Activated CD8-positive, alpha-beta T cell treated with anti-CD3 and anti-CD28 coated beads for 36 hours (primary cell): ENCODE measurements at regions of chr6 and their contacts with region 1.

Region 1: DNA sequence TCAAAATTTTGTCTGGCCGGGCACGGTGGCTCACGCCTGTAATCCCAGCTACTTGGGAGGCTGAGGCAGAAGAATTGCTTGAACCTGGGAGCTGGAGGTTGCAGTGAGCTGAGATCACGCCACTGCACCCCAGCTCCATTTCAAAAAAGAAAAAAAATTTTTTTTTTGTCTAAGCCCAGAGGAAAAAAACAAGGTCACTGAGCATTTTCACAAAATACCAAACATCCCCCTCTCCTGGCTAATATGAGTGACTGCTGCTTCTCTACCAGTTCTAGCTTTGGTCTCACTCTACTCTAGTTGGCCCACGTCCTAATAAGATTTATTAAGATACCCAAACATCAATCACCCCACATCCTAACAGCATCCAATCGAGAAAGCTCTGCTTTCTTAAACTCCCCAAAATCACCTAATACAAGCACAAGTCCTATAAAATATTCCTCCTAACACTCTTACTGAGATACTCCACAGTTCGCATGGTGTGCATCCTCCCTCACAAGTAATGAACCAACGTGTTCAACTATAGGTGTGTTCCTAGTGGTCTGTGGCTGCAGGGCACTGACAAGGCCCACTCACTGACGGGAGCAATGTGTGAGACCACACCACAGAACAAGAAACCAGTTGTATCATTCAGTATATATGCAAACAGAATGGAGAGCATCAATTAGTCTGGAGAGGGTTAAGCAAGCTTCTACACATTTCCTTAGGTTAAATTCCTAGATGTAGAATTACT is 64.2 kb downstream of the FKBP5 start:
- DNase-seq: peak; percentile 35
- ATAC-seq: peak; percentile 73
- H3K4me3 Mint-ChIP-seq: no peak overlapping the region
- H3K27ac Mint-ChIP-seq: peak overlapping the region; percentile 57
- H3K4me1 Mint-ChIP-seq: peaks cover 38% of the 10 kb centered on the region
- H3K27me3 Mint-ChIP-seq: no peaks in the 10 kb centered on the region
- CTCF ChIP-seq: peak; percentile 49

Region 2: GRCh38 chr6:35590622-35591066 is 33.9 kb before region 1 on chr6:
- CTCF ChIA-PET with region 1: interaction called, 63 read pairs
- POLR2A ChIA-PET with region 1: interaction called, 5 read pairs
- intact Hi-C with region 1: loop called (anchors 5 kb)
- DNase-seq: no peak
- ATAC-seq: no peak
- H3K4me3 Mint-ChIP-seq: no peak overlapping the region
- H3K27ac Mint-ChIP-seq: peak overlapping the region; percentile 49
- H3K4me1 Mint-ChIP-seq: peaks cover 79% of the 10 kb centered on the region
- H3K27me3 Mint-ChIP-seq: no peaks in the 10 kb centered on the region
- CTCF ChIP-seq: no peak

Region 3: GRCh38 chr6:35601331-35602132 is 23.0 kb before region 1 on chr6:
- CTCF ChIA-PET with region 1: interaction called, 19 read pairs
- POLR2A ChIA-PET with region 1: interaction called, 4 read pairs
- intact Hi-C with region 1: no loop called
- DNase-seq: peak; percentile 76
- ATAC-seq: peak; percentile 71
- H3K4me3 Mint-ChIP-seq: peak overlapping the region; percentile 60
- H3K27ac Mint-ChIP-seq: peak overlapping the region; percentile 70
- H3K4me1 Mint-ChIP-seq: peaks cover 70% of the 10 kb centered on the region
- H3K27me3 Mint-ChIP-seq: no peaks in the 10 kb centered on the region
- CTCF ChIP-seq: no peak

Region 4: GRCh38 chr6:35611240-35611639 is 13.3 kb before region 1 on chr6:
- CTCF ChIA-PET with region 1: interaction called, 14 read pairs
- POLR2A ChIA-PET with region 1: interaction called, 4 read pairs
- intact Hi-C with region 1: no loop called
- DNase-seq: peak; percentile 71
- ATAC-seq: peak; percentile 92
- H3K4me3 Mint-ChIP-seq: no peak overlapping the region
- H3K27ac Mint-ChIP-seq: peak overlapping the region; percentile 71
- H3K4me1 Mint-ChIP-seq: peaks cover 70% of the 10 kb centered on the region
- H3K27me3 Mint-ChIP-seq: no peaks in the 10 kb centered on the region
- CTCF ChIP-seq: no peak

Region 5: GRCh38 chr6:35640017-35640664 is 15.6 kb after region 1 on chr6:
- CTCF ChIA-PET with region 1: interaction called, 35 read pairs
- POLR2A ChIA-PET with region 1: interaction called, 3 read pairs
- intact Hi-C with region 1: no loop called
- DNase-seq: no peak
- ATAC-seq: no peak
- H3K4me3 Mint-ChIP-seq: no peak overlapping the region
- H3K27ac Mint-ChIP-seq: peak overlapping the region; percentile 8
- H3K4me1 Mint-ChIP-seq: peaks cover 64% of the 10 kb centered on the region
- H3K27me3 Mint-ChIP-seq: no peaks in the 10 kb centered on the region
- CTCF ChIP-seq: no peak

Region 6: GRCh38 chr6:35669451-35670045 is 45.0 kb after region 1 on chr6:
- CTCF ChIA-PET with region 1: interaction called, 13 read pairs
- POLR2A ChIA-PET with region 1: interaction called, 3 read pairs
- intact Hi-C with region 1: no loop called
- DNase-seq: no peak
- ATAC-seq: peak; percentile 54
- H3K4me3 Mint-ChIP-seq: peak overlapping the region; percentile 56
- H3K27ac Mint-ChIP-seq: peak overlapping the region; percentile 91
- H3K4me1 Mint-ChIP-seq: peaks cover 40% of the 10 kb centered on the region
- H3K27me3 Mint-ChIP-seq: no peaks in the 10 kb centered on the region
- CTCF ChIP-seq: no peak